Calu3 (cell line): ENCODE measurements at regions of chr3 and their contacts with region 1.

Region 1: GRCh38 chr3:155323063-155323666 is 29.7 kb upstream of the STRIT1 start:
- DNase-seq: peak; percentile 71
- H3K4me3 Mint-ChIP-seq: no peak overlapping the region
- H3K27ac Mint-ChIP-seq: no peak overlapping the region
- H3K4me1 Mint-ChIP-seq: peaks cover 61% of the 10 kb centered on the region
- H3K27me3 Mint-ChIP-seq: no peaks in the 10 kb centered on the region
- CTCF ChIP-seq: peak; percentile 73

Region 2: DNA sequence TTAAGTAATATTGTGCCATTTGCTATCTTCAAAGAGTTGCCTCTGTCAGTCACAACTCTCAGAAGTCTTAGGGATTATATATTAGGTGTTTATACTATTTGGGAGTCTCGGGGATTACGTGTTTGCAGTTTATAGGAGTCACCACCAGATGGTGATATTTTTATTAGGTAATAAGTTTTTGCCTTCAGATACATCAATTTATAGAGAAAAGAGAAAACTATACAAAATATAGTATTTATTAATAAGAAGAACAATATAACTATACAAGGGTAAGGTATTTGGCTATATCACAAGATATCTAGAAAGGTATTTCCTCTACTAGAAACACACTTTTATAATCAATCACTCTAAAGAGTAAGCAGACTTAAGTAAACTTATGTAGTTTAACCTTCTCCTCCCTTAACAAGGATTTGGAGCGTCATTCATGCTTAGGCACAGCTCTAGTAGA is 988.2 kb before region 1 on chr3:
- CTCF ChIA-PET with region 1: no interaction called
- intact Hi-C with region 1: loop called (anchors 2 kb)
- DNase-seq: peak; percentile 30
- H3K4me3 Mint-ChIP-seq: no peak overlapping the region
- H3K27ac Mint-ChIP-seq: no peak overlapping the region
- H3K4me1 Mint-ChIP-seq: peaks cover 8% of the 10 kb centered on the region
- H3K27me3 Mint-ChIP-seq: peaks cover 7% of the 10 kb centered on the region
- CTCF ChIP-seq: peak; percentile 68

Region 3: GRCh38 chr3:154345422-154346122 is 977.6 kb before region 1 on chr3:
- CTCF ChIA-PET with region 1: no interaction called
- intact Hi-C with region 1: no loop called
- DNase-seq: no peak
- H3K4me3 Mint-ChIP-seq: no peak overlapping the region
- H3K27ac Mint-ChIP-seq: no peak overlapping the region
- H3K4me1 Mint-ChIP-seq: no peaks in the 10 kb centered on the region
- H3K27me3 Mint-ChIP-seq: no peaks in the 10 kb centered on the region
- CTCF ChIP-seq: no peak

Region 4: DNA sequence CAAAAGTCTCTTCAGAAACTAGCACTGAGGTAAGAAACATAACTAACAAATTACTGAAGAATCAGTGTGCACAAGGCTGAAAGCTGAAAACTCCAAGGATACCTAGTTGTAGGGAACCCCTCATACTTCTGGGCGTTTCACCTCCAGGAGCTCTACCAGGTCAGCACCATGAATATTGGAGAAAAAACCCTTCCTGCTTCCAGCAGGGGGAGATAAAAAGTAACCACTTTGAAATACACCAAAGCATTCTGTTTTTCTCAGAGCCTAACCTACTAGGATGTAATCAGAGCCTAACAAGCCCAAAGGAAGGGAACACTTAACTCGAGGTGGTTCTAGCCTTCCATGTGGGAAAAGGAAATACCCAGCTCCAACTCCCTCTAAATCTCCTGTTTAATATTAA is 418.8 kb before region 1 on chr3:
- CTCF ChIA-PET with region 1: interaction called, 6 read pairs
- intact Hi-C with region 1: loop called (anchors 1 kb)
- DNase-seq: peak; percentile 24
- H3K4me3 Mint-ChIP-seq: no peak overlapping the region
- H3K27ac Mint-ChIP-seq: no peak overlapping the region
- H3K4me1 Mint-ChIP-seq: no peaks in the 10 kb centered on the region
- H3K27me3 Mint-ChIP-seq: no peaks in the 10 kb centered on the region
- CTCF ChIP-seq: peak; percentile 64

Region 5: DNA sequence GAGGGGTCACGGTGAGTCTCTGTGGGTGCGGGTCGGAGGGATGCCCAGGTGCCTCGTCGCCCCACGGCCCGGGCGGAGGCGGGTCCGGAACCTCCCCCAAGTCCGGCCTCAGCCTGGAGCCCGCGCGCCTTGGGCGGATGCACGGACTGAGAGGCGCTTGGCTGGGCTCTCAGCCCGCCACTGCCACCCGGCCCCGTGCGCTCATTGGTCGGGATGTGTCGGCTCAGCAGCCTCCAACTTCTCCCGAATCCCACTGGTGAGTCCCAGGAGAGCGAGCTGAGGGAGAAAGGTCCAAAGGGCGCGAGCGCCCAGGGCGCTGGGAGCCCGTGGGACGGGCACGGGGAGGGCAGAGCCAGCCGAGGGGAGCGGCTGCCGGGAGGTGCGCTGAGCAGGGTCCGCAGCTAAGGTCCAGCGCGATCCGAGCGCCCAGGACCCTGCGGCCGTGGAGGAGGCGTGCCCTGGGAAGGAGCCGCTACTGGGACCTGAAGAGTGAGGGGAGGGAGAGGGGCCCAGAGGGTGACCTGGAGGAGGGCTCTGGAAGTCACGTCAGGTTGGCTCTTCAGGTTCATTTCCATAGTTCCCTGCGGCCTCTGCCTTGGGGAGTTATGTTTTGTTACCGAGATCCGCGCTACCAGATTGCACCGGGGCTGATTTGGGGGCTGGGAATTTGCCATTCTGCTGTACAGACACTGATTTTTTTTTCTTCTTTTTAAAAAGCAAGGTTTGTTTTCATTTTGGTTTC is 243.2 kb before region 1 on chr3 and contains the start of gene MME:
- CTCF ChIA-PET with region 1: no interaction called
- intact Hi-C with region 1: loop called (anchors 2 kb)
- DNase-seq: peak; percentile 58
- H3K4me3 Mint-ChIP-seq: peak within 1 kb of the TSS; percentile 94
- H3K27ac Mint-ChIP-seq: peak within 1 kb of the TSS; percentile 53
- H3K4me1 Mint-ChIP-seq: peaks cover 24% of the 10 kb centered on the region
- H3K27me3 Mint-ChIP-seq: no peaks in the 10 kb centered on the region
- CTCF ChIP-seq: no peak
- total RNA-seq, gene MME: 12.8 and 14.4 TPM in 2 replicates

Region 6: DNA sequence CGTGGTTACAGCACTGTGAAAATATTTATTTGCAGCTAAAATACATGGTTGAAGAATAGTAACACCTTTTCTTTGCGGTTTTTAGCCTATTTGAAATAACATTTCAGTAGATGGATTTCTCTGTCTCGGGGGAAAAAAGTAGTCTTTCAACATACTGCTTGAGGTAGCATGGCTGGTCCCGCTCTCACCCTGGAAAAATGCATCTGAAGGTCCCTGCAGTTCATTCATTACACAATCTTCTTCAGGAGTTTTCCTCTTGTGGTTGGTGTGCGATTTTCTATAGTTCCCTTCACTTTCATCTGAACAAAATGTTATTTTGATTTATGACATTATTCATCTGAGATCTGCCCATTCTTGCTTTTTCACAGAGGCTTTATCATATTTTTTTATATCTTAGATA is 105.6 kb before region 1 on chr3:
- CTCF ChIA-PET with region 1: no interaction called
- intact Hi-C with region 1: loop called (anchors 1 kb)
- DNase-seq: no peak
- H3K4me3 Mint-ChIP-seq: no peak overlapping the region
- H3K27ac Mint-ChIP-seq: no peak overlapping the region
- H3K4me1 Mint-ChIP-seq: no peaks in the 10 kb centered on the region
- H3K27me3 Mint-ChIP-seq: no peaks in the 10 kb centered on the region
- CTCF ChIP-seq: no peak

Region 7: DNA sequence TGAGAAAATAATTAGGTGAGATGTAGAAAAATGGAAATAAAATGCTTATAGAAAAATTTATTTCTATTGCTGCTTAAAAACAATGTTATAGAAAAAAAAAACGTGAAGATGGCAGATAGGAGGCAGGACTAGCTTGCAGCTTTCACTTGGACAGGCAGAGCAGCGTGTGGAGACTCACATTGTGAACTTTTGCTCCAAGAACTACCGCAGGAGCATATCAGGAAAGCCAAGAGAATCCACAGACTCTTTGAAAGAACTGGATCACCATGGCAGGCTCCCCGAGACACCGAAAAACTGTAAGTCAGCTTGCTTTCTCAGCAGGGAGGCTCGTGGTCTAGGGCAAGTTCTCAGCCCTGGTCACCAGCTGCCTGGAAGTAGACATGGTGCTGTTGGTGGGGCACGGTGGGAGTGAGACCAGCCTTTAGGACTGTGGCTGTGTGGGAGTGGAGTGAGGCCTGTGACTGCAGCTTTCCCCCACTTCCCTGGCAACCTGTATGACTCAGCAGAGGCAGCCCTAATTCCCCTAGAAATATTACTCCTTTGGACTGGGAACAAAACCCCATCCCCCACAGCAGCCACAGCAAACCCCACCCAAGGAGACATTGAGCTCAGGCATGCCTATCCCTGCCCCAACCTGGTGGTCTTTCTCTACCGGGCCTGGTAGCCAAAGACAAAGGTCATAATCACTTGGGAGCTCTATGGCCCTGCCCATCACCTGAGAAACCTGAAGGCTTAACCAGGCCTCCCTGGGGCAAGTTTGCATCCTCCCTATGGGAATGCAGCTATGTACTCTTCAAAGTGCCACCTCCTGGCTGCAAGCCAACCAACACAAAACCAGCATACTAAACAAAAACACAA is 52.5 kb before region 1 on chr3:
- CTCF ChIA-PET with region 1: interaction called, 4 read pairs
- intact Hi-C with region 1: loop called (anchors 1 kb)
- DNase-seq: peak; percentile 50
- H3K4me3 Mint-ChIP-seq: peak overlapping the region; percentile 14
- H3K27ac Mint-ChIP-seq: peak overlapping the region; percentile 85
- H3K4me1 Mint-ChIP-seq: peaks cover 28% of the 10 kb centered on the region
- H3K27me3 Mint-ChIP-seq: no peaks in the 10 kb centered on the region
- CTCF ChIP-seq: no peak

Region 8: DNA sequence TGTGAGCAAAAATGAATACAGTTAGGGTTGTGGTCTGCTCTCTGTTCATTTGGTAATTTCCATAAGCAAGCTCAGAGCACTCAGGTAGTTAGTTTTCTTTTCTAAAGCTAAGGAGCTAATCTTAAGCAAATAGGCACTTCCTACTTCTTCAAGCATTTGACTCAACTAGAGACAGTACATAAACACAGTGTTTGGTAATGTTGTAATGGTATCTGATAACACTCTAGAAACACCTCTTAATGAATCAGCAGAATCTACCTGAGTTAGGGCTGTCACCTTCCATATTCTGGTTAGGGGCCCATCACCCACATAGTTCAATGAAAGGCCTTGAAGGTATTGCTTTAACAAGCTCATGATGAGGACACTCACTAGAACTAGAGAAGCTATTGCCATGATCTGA is 338.6 kb after region 1 on chr3:
- CTCF ChIA-PET with region 1: no interaction called
- intact Hi-C with region 1: no loop called
- DNase-seq: no peak
- H3K4me3 Mint-ChIP-seq: no peak overlapping the region
- H3K27ac Mint-ChIP-seq: peak overlapping the region; percentile 68
- H3K4me1 Mint-ChIP-seq: peaks cover 55% of the 10 kb centered on the region
- H3K27me3 Mint-ChIP-seq: no peaks in the 10 kb centered on the region
- CTCF ChIP-seq: no peak